Right ventricle myocardium inferior (tissue), 1 donor: ENCODE measurements at regions of chr3 and their contacts with region 1.

Region 1: GRCh38 chr3:16311960-16312451 is 47.0 kb downstream of the OXNAD1 start:
- DNase-seq: no peak
- ATAC-seq: peak; percentile 63

Region 2: GRCh38 chr3:16264708-16265454 is 47.1 kb before region 1 on chr3 and contains the starts of genes DPH3 and OXNAD1:
- intact Hi-C with region 1: no loop called
- DNase-seq: peak; percentile 100
- ATAC-seq: peak; percentile 99
- total RNA-seq, gene DPH3: 20.5 TPM
- total RNA-seq, gene OXNAD1: 17.2 TPM

Region 3: GRCh38 chr3:16516695-16517481 is 204.9 kb after region 1 on chr3:
- intact Hi-C with region 1: loop called (anchors 2 kb)
- DNase-seq: peak; percentile 71
- ATAC-seq: no peak